Sigmoid colon (tissue), 7 donors: ENCODE measurements at regions of chr2 and their contacts with region 1.

Region 1: DNA sequence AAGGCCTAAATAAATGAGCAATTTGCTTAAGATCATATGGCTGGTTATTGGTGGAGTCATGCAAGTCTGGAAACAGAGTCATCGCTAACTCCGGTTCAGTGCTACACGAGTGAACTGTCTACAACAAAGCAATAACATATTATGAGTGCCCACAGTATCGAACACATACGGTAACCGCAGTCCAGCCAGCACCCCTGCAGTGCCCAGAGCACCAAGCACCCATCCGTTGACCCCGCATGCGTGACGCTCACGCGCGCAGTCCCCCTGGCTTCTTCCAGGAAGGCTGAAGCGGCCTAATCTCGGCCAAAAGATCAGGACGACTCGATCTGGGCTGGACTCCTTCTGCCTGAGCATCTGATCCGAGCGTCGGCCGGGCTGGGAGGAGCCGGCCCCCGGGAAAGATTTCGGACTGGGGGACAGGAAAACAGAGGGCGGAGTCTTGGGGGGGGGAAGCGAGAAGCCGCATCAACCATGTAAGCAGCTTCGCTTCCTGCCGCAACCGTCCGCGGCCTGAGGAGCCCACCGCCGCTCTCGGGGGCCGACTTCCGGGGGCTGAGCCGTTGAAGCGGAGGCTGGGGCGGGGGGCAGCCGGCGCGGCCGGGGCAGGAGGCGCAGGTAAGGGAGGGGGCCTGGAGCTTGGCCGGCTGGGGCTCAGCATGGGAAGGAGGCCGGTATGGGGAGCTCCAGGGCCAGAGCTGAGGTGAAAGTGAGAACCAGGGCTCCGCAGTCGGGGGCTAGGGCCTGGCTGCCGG is at the start of gene PIKFYVE:
- DNase-seq: peak; percentile 98
- H3K4me3 ChIP-seq: peak within 1 kb of the TSS; percentile 78 to 98 (median 92)
- H3K27ac ChIP-seq: peak within 1 kb of the TSS; percentile 93 to 98 (median 96)
- H3K4me1 ChIP-seq: peaks cover 0 to 42% (median 35%) of the 10 kb centered on the region in 4 donors
- H3K27me3 ChIP-seq: no peaks in the 10 kb centered on the region
- CTCF ChIP-seq: no peak
- EP300 ChIP-seq: peak in 3 of 4 donors; percentile 22 to 82 (median 40)
- POLR2A ChIP-seq: peak; percentile 59 to 73
- total RNA-seq, gene PIKFYVE: 22.1 to 27.2 (median 22.7) TPM

Region 2: GRCh38 chr2:207143215-207144172 is 1122.5 kb before region 1 on chr2:
- intact Hi-C with region 1: loop called (anchors 10 kb)
- DNase-seq: peak; percentile 90
- H3K4me3 ChIP-seq: peak overlapping the region; percentile 2 to 31 (median 14)
- H3K27ac ChIP-seq: peak overlapping the region; percentile 78 to 100 (median 82)
- H3K4me1 ChIP-seq: peaks cover 0 to 99% (median 88%) of the 10 kb centered on the region in 4 donors
- H3K27me3 ChIP-seq: no peaks in the 10 kb centered on the region
- CTCF ChIP-seq: no peak
- EP300 ChIP-seq: no peak
- POLR2A ChIP-seq: peak in 1 of 2 donors; percentile 8

Region 3: GRCh38 chr2:207710814-207711740 is 554.9 kb before region 1 on chr2 and contains the start of gene CCNYL1:
- intact Hi-C with region 1: loop called (anchors 10 kb)
- DNase-seq: peak; percentile 100
- H3K4me3 ChIP-seq: peak within 1 kb of the TSS; percentile 77 to 98 (median 89)
- H3K27ac ChIP-seq: peak within 1 kb of the TSS; percentile 91 to 95 (median 92)
- H3K4me1 ChIP-seq: peaks cover 0 to 25% (median 21%) of the 10 kb centered on the region in 4 donors
- H3K27me3 ChIP-seq: no peaks in the 10 kb centered on the region
- CTCF ChIP-seq: peak in 3 of 4 experiments; percentile 18 to 41 (median 23)
- EP300 ChIP-seq: no peak
- POLR2A ChIP-seq: peak; percentile 38 to 69
- total RNA-seq, gene CCNYL1: 9.2 to 17.8 (median 11.5) TPM

Region 4: GRCh38 chr2:208254871-208255556 is 11.0 kb before region 1 on chr2 and contains the start of gene IDH1:
- intact Hi-C with region 1: loop called (anchors 1 kb)
- DNase-seq: peak; percentile 97
- H3K4me3 ChIP-seq: peak within 1 kb of the TSS; percentile 66 to 78 (median 74)
- H3K27ac ChIP-seq: peak within 1 kb of the TSS; percentile 79 to 86 (median 84)
- H3K4me1 ChIP-seq: peaks cover 0 to 43% (median 22%) of the 10 kb centered on the region in 4 donors
- H3K27me3 ChIP-seq: no peaks in the 10 kb centered on the region
- CTCF ChIP-seq: peak in 2 of 4 experiments; percentile 19 to 29
- EP300 ChIP-seq: no peak
- POLR2A ChIP-seq: peak in 1 of 2 donors; percentile 46
- total RNA-seq, gene IDH1: 34.2 to 46.4 (median 37.7) TPM

Region 5: DNA sequence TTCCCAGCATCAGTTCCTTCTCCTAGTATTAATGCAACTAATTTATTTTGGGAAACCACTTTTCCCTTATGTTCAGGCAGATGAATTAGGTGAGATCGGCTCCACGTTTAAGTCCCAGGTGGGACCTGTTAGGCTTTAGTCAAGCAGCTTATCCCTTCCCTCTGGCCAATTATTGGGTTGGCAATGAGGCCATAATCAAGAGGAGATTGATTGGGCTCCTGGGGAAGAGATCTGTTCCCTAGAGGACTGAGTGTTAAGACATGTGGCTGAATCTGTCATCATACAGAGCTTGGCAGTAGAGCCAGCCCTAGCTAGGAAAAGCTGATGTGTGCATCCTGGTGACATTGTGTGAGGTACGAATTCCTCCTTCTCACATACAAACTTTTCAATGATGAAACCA is 245.0 kb after region 1 on chr2:
- intact Hi-C with region 1: no loop called
- DNase-seq: no peak
- H3K4me3 ChIP-seq: no peak overlapping the region
- H3K27ac ChIP-seq: no peak overlapping the region
- H3K4me1 ChIP-seq: peaks cover 0 to 2% (median 0%) of the 10 kb centered on the region in 4 donors
- H3K27me3 ChIP-seq: no peaks in the 10 kb centered on the region
- CTCF ChIP-seq: no peak
- EP300 ChIP-seq: no peak
- POLR2A ChIP-seq: no peak